PC-9 (cell line): ENCODE measurements at regions of chr6 and their contacts with region 1.

Region 1: DNA sequence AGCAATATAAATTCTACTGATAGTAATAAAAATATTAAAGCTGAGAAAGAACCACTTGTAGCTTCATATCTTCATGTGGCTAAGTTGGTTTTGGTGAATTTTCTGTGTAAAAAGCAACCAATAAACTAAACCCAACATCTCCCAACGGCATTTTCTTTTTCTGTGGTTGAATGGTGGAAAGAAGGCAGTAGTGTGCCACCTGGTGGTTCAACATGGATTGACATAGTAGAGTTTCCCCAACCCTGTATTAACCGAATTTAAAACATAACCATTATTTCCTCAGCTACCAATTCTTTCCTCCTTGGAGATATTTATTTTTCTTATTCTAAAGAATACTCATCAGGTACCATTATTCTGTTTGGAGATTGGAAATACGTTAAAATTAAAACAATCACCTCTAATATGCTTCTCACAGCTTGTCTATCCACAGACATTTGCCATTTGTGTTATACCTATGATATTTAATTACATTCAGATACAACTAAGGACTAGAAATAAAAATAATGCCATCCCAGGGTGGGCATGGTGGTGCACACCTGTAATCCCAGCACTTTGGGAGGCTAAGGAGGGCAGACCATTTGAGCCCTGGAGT is 117.1 kb upstream of the EEF1E1 start:
- DNase-seq: peak in 1 of 2 experiments; percentile 33
- H3K4me3 ChIP-seq: no peak overlapping the region
- H3K27ac ChIP-seq: no peak overlapping the region
- H3K4me1 ChIP-seq: no peaks in the 10 kb centered on the region
- H3K27me3 ChIP-seq: no peaks in the 10 kb centered on the region
- CTCF ChIP-seq: peak; percentile 72

Region 2: GRCh38 chr6:8063761-8064637 is 155.4 kb before region 1 on chr6 and contains the start of gene BLOC1S5:
- CTCF ChIA-PET with region 1: no interaction called
- POLR2A ChIA-PET with region 1: no interaction called
- intact Hi-C with region 1: loop called (anchors 1 kb)
- DNase-seq: peak; percentile 84 to 95
- H3K4me3 ChIP-seq: peak within 1 kb of the TSS; percentile 83
- H3K27ac ChIP-seq: peak within 1 kb of the TSS; percentile 36
- H3K4me1 ChIP-seq: 0 out of 2 replicates have a peak, but pooled peaks cover 4% of the 10 kb centered on the region
- H3K27me3 ChIP-seq: no peaks in the 10 kb centered on the region
- CTCF ChIP-seq: no peak
- total RNA-seq, gene BLOC1S5: 12.5 and 16.1 TPM in 2 replicates

Region 3: GRCh38 chr6:8131256-8131897 is 88.1 kb before region 1 on chr6:
- CTCF ChIA-PET with region 1: interaction called, 53 read pairs
- POLR2A ChIA-PET with region 1: no interaction called
- intact Hi-C with region 1: loop called (anchors 1 kb)
- DNase-seq: peak; percentile 45 to 58
- H3K4me3 ChIP-seq: no peak overlapping the region
- H3K27ac ChIP-seq: no peak overlapping the region
- H3K4me1 ChIP-seq: peaks cover 3% of the 10 kb centered on the region; the same call in 1 of the 2 replicates
- H3K27me3 ChIP-seq: no peaks in the 10 kb centered on the region
- CTCF ChIP-seq: peak; percentile 69

Region 4: GRCh38 chr6:8137529-8137939 is 81.9 kb before region 1 on chr6:
- CTCF ChIA-PET with region 1: interaction called, 53 read pairs
- POLR2A ChIA-PET with region 1: no interaction called
- intact Hi-C with region 1: no loop called
- DNase-seq: no peak
- H3K4me3 ChIP-seq: no peak overlapping the region
- H3K27ac ChIP-seq: no peak overlapping the region
- H3K4me1 ChIP-seq: no peaks in the 10 kb centered on the region
- H3K27me3 ChIP-seq: no peaks in the 10 kb centered on the region
- CTCF ChIP-seq: no peak

Region 5: GRCh38 chr6:8180327-8181159 is 38.9 kb before region 1 on chr6:
- CTCF ChIA-PET with region 1: no interaction called
- POLR2A ChIA-PET with region 1: no interaction called
- intact Hi-C with region 1: loop called (anchors 5 kb)
- DNase-seq: peak; percentile 42 to 54
- H3K4me3 ChIP-seq: no peak overlapping the region
- H3K27ac ChIP-seq: no peak overlapping the region
- H3K4me1 ChIP-seq: peaks cover 14% of the 10 kb centered on the region
- H3K27me3 ChIP-seq: no peaks in the 10 kb centered on the region
- CTCF ChIP-seq: no peak